Panc1 (cell line): ENCODE measurements at regions of chr16 and their contacts with region 1.

Region 1: DNA sequence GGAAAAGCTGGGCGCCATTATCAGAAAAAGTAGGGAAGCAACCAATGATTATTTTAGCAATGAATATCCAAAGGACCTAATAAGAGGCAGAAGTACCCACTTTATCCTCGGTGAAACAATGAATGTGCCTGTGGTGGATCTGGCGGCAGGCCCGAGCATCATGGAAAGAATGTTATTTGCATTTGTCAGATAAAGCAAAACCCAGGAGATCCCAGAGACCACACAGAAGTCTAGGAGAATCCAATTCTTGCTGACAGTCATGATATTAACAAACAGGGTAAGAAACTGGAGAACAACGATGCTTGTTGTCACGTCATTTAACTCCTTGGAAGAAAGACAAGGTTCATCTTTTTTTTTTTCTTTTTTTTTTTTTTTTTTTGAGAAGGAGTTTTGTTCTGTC is 12.0 kb upstream of the TNRC6A start:
- DNase-seq: no peak
- ATAC-seq: no peak
- H3K4me3 ChIP-seq: no peak overlapping the region
- H3K27ac ChIP-seq: no peak overlapping the region
- H3K4me1 ChIP-seq: 0 out of 2 replicates have a peak, but pooled peaks cover 3% of the 10 kb centered on the region
- H3K27me3 ChIP-seq: no peaks in the 10 kb centered on the region
- CTCF ChIP-seq: no peak

Region 2: GRCh38 chr16:24701521-24701951 is 15.9 kb before region 1 on chr16:
- CTCF ChIA-PET with region 1: no interaction called
- POLR2A ChIA-PET with region 1: interaction called, 12 read pairs
- in situ Hi-C with region 1: no loop called
- intact Hi-C with region 1: no loop called
- DNase-seq: no peak
- ATAC-seq: peak; percentile 61
- H3K4me3 ChIP-seq: peak overlapping the region in 1 of 2 experiments; percentile 45; a peak in 2 of 4 replicates
- H3K27ac ChIP-seq: peak overlapping the region; percentile 99
- H3K4me1 ChIP-seq: peaks cover 34% of the 10 kb centered on the region
- H3K27me3 ChIP-seq: no peaks in the 10 kb centered on the region
- CTCF ChIP-seq: no peak